Esophagus muscularis mucosa (tissue), 4 donors: ENCODE measurements at regions of chr5 and their contacts with region 1.

Region 1: DNA sequence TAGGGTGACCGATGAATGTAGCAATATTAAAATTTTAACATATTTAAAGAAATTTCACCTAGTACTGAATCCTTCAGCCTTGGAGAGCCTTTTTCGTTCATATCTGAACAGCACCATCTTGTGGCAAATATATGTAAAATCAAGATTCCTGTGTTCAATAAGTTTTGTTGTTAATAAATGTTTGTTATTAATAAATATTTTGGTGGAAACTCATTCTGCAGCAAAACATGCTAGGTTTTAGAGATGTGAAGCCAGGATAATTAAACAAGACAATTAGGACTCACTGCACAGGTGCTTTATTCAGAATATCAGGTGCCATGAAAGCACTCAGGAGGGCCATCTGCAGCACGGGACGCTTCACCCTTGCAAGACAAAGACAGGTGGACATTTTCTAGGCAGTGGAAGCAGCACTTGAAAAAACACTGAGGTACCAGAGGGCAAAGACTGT is 15.7 kb downstream of the TICAM2 start:
- DNase-seq: no peak
- H3K4me3 ChIP-seq: no peak overlapping the region
- H3K27ac ChIP-seq: no peak overlapping the region
- H3K4me1 ChIP-seq: peaks cover 0 to 35% (median 10%) of the 10 kb centered on the region in 4 donors
- H3K27me3 ChIP-seq: no peaks in the 10 kb centered on the region
- CTCF ChIP-seq: peak; percentile 60 to 62 (median 60)
- EP300 ChIP-seq: no peak
- POLR2A ChIP-seq: no peak

Region 2: DNA sequence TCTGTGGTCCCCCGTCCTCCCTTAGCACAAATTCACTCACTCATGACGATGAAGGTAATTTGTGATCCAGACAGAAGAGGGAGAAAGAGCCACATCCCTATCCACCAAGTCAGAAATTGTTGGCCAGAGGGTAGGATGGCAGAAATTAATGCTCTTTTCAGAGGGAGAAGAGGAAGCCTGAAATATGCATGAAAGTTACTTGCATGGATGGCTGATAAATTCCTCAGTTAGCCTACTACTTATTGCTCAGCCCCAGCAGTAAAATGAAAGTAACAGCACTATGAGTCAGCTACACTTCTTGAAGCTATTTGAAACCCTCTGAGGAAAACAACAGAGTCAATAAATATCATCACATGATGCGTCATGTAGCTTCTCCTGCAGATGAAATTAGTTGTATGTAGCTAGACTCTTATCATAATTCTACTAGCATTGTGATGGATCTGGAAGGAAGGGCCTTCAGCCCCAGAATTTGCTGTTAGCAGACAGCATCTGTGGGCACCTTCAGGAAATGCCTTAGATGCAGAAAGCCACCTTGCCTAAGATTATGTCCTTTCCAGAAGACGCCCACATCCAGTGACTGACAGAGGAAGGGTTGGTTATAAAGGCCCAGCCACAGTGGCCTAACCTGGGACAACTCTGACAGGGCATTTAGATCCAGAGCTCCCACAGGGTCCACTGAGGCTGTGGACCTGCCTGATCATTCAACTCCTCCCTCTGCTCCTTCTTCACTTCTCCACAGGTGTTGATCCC is 209.0 kb before region 1 on chr5:
- intact Hi-C with region 1: loop called (anchors 5 kb)
- DNase-seq: peak; percentile 79
- H3K4me3 ChIP-seq: peak overlapping the region in 2 of 4 donors; percentile 5 to 13
- H3K27ac ChIP-seq: peak overlapping the region in 1 of 4 donors; percentile 40
- H3K4me1 ChIP-seq: peaks cover 10 to 14% (median 11%) of the 10 kb centered on the region in 4 donors
- H3K27me3 ChIP-seq: no peaks in the 10 kb centered on the region
- CTCF ChIP-seq: peak; percentile 44 to 58 (median 58)
- EP300 ChIP-seq: no peak
- POLR2A ChIP-seq: no peak

Region 3: GRCh38 chr5:115666023-115666422 is 79.4 kb after region 1 on chr5:
- intact Hi-C with region 1: no loop called
- DNase-seq: no peak
- H3K4me3 ChIP-seq: no peak overlapping the region
- H3K27ac ChIP-seq: no peak overlapping the region
- H3K4me1 ChIP-seq: no peaks in the 10 kb centered on the region
- H3K27me3 ChIP-seq: no peaks in the 10 kb centered on the region
- CTCF ChIP-seq: no peak
- EP300 ChIP-seq: no peak
- POLR2A ChIP-seq: no peak